ENCODE measurements at regions of chr17 and their contacts with region 1.

Region 1: GRCh38 chr17:48690655-48691054 is 31.7 kb downstream of the PRAC1 start:
- DNase-seq: no peak
- ATAC-seq: no peak
- H3K4me3 ChIP-seq: no peak overlapping the region
- H3K27ac ChIP-seq: no peak overlapping the region
- H3K4me1 ChIP-seq: no peaks in the 10 kb centered on the region
- H3K27me3 ChIP-seq: no peaks in the 10 kb centered on the region
- CTCF ChIP-seq: no peak

Region 2: DNA sequence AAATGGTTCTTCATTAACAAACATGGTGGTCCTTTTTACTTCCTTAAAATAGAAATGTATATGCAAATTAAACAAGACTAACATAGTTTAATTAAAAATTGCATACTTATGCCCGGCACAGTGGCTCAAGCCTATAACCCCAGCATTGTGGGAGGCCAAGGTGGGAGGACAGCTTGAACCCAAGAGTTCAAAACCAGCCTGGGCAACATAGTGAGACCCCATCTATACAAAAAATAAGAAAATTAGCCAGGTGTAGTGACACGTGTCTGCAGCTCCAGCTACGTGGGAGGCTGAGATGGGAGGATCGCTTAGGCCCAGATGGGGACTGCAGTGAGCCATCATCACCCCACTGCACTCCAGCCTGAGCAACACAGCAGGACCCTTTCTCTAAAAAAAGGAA is 1519.9 kb before region 1 on chr17:
- CTCF ChIA-PET with region 1: interaction called, 10 read pairs
- POLR2A ChIA-PET with region 1: no interaction called
- intact Hi-C with region 1: no loop called
- DNase-seq: no peak
- ATAC-seq: no peak
- H3K4me3 ChIP-seq: no peak overlapping the region
- H3K27ac ChIP-seq: no peak overlapping the region
- H3K4me1 ChIP-seq: no peaks in the 10 kb centered on the region
- H3K27me3 ChIP-seq: no peaks in the 10 kb centered on the region
- CTCF ChIP-seq: no peak

Region 3: GRCh38 chr17:48107168-48108132 is 583.2 kb before region 1 on chr17 and contains the start of gene SNX11:
- CTCF ChIA-PET with region 1: no interaction called
- POLR2A ChIA-PET with region 1: interaction called, 25 read pairs
- intact Hi-C with region 1: no loop called
- DNase-seq: peak; percentile 90
- ATAC-seq: peak; percentile 94
- H3K4me3 ChIP-seq: peak within 1 kb of the TSS; percentile 89
- H3K27ac ChIP-seq: peak within 1 kb of the TSS; percentile 88
- H3K4me1 ChIP-seq: peaks cover 7% of the 10 kb centered on the region; the same call in 1 of the 2 replicates
- H3K27me3 ChIP-seq: no peaks in the 10 kb centered on the region
- CTCF ChIP-seq: no peak
- total RNA-seq, gene SNX11: 17.7 and 23.3 TPM in 2 replicates

Measured in PC-3 (cell line).